Cardiac septum (tissue), 1 donor: ENCODE measurements at regions of chr17 and their contacts with region 1.

Region 1: DNA sequence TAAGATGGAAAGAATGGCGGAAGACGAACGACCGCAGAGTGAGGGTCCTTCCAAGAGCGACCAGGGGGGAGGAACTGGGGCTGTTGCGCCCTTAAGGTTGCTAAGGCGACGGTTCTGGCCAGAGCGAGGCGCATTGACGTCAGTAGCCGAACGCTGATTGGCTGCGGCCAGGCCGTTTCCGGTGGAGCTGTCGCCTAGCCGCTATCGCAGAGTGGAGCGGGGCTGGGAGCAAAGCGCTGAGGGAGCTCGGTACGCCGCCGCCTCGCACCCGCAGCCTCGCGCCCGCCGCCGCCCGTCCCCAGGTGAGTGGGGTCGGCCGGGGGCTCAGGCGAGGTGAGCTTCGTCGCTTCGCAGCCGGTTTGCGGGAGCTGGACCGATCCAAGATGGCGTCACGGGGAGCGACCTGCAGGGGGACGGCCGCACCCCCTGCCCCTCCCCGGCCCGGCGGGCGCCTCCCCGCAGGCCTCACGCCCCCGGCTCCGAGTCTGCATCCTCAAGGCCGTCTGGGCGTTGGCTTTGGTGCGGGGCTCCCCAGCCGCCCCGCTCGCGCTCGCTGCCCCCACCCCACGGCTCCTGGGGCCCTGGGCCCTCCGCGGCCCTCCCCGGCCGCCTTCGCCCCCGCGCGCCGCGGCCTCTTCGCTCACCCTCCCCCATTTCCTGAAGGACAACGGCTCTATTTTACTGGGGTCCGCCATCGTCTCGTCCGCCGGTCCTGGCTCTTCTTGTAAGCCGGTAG is at the start of gene PRKAR1A:
- DNase-seq: peak; percentile 99
- total RNA-seq, gene PRKAR1A: 967 TPM

Region 2: GRCh38 chr17:68133346-68134045 is 378.9 kb before region 1 on chr17:
- intact Hi-C with region 1: no loop called
- DNase-seq: no peak

Region 3: DNA sequence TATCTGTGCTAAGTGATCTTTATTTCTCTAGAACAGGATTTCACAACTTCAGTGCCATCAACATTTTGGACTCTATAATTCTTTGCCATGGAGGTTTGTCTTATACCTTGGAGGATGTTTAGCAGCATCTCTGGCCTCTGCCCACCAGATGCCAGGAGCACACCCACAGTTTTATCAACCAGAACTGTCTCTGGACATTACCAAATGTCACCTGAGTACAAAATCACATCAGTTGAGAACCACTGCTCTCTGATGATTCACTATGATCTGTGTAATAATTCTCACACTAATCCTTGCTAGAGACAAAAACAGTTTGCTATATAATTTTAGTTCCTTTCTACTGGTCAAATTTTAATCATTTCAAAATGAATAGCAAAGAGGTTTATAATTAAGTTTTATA is 367.3 kb before region 1 on chr17:
- intact Hi-C with region 1: no loop called
- DNase-seq: no peak

Region 4: DNA sequence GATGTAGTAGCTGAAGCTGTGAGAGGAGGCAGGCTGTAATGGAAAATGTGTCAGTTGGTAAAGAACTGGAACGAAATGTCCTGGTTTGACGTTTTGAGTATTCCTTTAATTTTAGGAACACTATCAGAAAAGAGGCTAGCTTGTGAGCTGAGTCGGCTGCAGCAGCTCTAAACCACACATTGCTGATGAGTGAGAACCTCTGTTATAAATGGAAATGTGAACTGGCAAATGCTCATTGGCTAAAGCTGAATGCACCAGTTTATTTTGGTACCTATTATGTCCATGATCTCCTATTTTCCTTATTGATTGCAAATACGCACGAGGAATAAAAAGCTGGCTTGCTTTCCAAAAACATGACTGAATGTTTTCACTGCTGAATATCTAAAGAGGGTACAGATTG is 44.1 kb before region 1 on chr17:
- intact Hi-C with region 1: loop called (anchors 1 kb)
- DNase-seq: no peak